Calu3 (cell line): ENCODE measurements at regions of chr3 and their contacts with region 1.

Region 1: DNA sequence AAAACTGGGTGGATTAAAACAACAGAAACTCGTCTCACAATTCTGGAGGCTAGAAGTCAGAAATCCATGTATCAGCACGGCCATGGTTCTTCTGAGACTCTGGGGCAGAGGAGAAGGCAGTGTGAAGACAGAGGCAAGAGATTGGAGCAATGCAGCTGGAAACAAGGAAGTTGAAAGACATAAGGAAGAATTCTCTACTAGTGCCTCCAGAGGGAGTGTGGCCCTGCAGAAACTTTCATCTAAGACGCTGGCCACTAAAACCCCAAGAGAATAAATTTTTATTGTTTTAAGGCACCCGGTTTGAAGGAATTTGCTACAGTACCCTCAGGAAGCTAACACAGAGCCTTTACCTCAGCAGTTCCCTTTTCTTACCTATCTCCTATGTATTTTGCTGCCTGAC is 1012.2 kb upstream of the CADM2 start:
- DNase-seq: peak; percentile 24
- H3K4me3 Mint-ChIP-seq: no peak overlapping the region
- H3K27ac Mint-ChIP-seq: peak overlapping the region; percentile 18
- H3K4me1 Mint-ChIP-seq: peaks cover 9% of the 10 kb centered on the region
- H3K27me3 Mint-ChIP-seq: no peaks in the 10 kb centered on the region
- CTCF ChIP-seq: peak; percentile 31

Region 2: DNA sequence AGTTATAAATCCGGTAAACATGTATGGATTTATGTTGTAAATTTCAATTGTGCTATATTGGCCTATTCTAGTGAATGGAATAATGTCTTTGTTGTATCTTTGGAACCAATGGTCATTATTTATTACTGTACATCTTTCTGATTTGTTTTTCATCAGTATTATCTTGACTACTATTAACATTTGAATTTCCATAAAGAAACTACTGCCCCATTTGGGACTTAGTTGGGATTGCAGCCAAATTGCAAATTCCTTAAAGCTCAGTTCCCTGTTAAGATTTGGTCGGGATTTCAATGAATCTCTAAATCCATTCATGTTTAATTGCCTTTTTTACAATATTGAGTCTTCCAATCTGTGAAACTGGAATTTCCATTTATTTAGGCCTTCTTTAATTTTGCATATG is 189.9 kb after region 1 on chr3:
- CTCF ChIA-PET with region 1: no interaction called
- intact Hi-C with region 1: loop called (anchors 5 kb)
- DNase-seq: no peak
- H3K4me3 Mint-ChIP-seq: no peak overlapping the region
- H3K27ac Mint-ChIP-seq: no peak overlapping the region
- H3K4me1 Mint-ChIP-seq: peaks cover 9% of the 10 kb centered on the region
- H3K27me3 Mint-ChIP-seq: no peaks in the 10 kb centered on the region
- CTCF ChIP-seq: peak; percentile 18